CD4-positive, alpha-beta T cell (primary cell): ENCODE measurements at regions of chr14 and their contacts with region 1.

Region 1: DNA sequence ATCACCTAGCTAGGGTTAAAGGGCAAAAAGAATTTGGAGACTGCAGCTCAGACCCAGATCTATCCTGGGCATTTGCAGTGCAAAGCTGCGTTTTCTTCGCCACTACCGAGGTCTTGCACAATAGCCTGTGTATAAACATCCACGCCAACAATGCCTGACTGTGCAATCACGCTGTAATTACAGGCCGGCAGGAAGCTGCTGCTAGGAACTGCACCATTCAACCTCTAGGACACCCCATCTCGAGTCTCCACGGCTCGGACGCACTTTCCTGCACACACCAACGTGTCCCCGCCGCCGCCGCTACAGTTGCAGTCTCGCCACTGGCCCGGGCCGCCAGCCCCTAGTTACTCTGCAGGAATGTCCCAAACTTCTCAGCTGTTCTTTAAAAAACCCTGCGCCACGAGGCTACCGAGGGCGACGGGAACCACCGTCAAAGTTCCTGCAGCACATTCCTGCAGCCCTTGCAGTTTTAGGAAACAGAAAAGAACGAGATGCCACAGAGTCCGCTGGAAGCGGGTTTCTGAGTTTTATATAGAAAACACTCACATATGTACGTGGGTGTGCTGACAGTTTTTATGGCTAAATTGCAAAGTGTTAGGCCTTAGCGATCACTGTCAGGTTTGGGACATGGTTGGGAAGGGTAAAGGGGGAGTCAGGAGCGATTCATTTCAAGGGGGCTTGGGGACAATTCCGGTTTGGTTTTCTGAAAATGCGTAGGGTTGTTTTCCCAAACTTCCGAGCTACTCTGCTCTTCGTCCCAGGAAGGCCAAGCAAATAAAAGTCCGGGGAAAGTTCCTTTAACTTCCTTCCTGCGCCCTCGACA is 65.5 kb upstream of the PTGR2 start:
- DNase-seq: peak; percentile 51 to 84 (median 58)
- ATAC-seq: peak; percentile 70
- H3K4me3 ChIP-seq: peak overlapping the region; percentile 79
- H3K4me3 Mint-ChIP-seq: peak overlapping the region; percentile 96
- H3K27ac ChIP-seq: peak overlapping the region; percentile 67 to 76
- H3K27ac Mint-ChIP-seq: peak overlapping the region; percentile 96
- H3K4me1 ChIP-seq: peaks cover 67% of the 10 kb centered on the region
- H3K4me1 Mint-ChIP-seq: peaks cover 62% of the 10 kb centered on the region
- H3K27me3 ChIP-seq: no peaks in the 10 kb centered on the region
- H3K27me3 Mint-ChIP-seq: no peaks in the 10 kb centered on the region
- CTCF ChIP-seq: no peak

Region 2: DNA sequence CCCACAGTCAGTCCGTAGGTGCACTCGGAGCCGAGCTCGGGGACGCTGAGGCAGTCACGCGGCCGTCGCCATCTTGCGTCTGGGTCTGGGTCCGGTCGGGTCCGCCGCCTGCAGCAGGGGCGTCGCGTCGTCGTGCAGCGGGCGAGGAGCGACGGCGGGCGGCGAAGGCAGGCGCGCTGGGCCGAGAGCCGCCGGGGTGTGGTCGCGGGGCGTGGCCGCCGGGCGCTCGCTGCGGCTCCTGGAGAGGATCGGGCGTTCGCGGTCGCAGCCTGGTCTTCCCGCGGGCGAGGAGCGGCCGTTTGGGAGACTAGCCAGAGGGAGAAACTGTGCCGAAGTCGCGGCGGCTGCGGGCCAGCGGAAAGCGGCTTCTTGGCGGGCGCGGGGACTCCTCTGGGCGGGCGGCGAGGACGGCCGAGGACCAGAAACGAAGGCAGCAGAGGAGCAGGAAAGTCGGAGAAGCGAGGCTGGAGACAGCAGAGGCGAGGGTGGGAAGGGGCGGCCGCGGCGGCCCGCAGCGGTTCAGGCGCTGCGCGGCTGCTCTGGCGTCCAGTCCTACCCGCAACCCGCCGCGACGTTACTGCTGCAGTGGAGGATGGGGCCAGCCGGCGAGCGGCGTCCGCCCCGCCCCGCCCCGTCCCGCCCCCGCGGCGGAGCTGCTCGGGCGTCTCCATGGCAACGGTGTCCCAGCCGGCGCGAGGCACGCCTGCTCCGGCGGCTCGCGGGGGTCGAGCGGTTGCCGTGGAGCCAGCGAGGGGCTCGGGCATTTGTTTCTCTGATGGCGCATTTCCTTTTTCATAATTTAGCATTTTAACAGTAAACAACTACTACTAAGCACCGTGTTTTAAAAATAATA is 72.1 kb before region 1 on chr14 and contains the start of gene PNMA1:
- CTCF ChIA-PET with region 1: interaction called, 3 read pairs
- POLR2A ChIA-PET with region 1: interaction called, 12 read pairs
- intact Hi-C with region 1: no loop called
- DNase-seq: peak; percentile 75 to 95 (median 82)
- ATAC-seq: peak; percentile 68
- H3K4me3 ChIP-seq: peak within 1 kb of the TSS; percentile 87
- H3K4me3 Mint-ChIP-seq: peak within 1 kb of the TSS; percentile 96
- H3K27ac ChIP-seq: peak within 1 kb of the TSS; percentile 73 to 77
- H3K27ac Mint-ChIP-seq: peak within 1 kb of the TSS; percentile 92
- H3K4me1 ChIP-seq: peaks cover 33% of the 10 kb centered on the region
- H3K4me1 Mint-ChIP-seq: peaks cover 33% of the 10 kb centered on the region
- H3K27me3 ChIP-seq: no peaks in the 10 kb centered on the region
- H3K27me3 Mint-ChIP-seq: no peaks in the 10 kb centered on the region
- CTCF ChIP-seq: no peak
- total RNA-seq, gene PNMA1: 52.6 to 55.9 TPM

Region 3: DNA sequence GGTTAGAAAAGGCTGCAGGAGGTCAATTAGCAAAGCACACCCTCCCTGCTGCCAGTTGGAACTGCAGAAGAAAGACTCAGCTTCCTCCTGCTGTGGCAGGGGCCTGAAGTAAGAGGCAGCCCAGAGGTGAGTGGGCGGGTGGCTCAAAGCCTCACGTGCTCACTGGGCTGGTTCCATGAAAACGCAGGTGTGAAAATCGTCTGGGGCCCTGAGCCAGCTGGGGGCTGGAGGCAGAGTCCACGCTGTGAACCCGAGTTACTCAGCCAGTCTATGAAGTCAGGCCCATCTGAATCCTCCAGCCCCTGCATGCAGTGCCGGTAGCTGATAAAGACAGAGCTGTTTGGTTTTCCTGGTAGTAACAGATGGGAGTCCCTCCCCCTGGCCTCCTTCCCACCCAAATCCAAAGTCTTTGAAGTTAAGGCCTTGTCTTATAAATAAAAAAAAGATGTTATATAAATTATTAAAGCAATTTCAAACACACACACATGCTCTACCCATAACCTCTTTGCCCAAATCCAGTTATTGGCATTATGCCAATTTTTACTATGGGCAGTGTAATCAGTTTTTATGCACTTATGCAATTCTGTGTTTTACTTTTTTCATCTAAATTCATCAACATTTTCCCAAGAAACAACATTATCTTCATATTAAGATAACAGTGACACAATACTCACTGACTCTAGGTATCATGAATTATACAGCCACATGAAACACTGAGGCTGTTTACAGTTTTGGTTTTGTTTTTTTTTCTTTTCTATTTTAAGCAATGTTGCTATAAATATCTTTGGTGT is 14.0 kb before region 1 on chr14:
- CTCF ChIA-PET with region 1: interaction called, 9 read pairs
- POLR2A ChIA-PET with region 1: interaction called, 430 read pairs
- intact Hi-C with region 1: loop called in 1 of 2 experiments (anchors 1 kb)
- DNase-seq: peak in 12 of 14 experiments; percentile 39 to 84 (median 59)
- ATAC-seq: peak; percentile 83
- H3K4me3 ChIP-seq: no peak overlapping the region
- H3K4me3 Mint-ChIP-seq: peak overlapping the region; percentile 81
- H3K27ac ChIP-seq: peak overlapping the region; percentile 48 to 60
- H3K27ac Mint-ChIP-seq: peak overlapping the region; percentile 88
- H3K4me1 ChIP-seq: peaks cover 74% of the 10 kb centered on the region
- H3K4me1 Mint-ChIP-seq: peaks cover 75% of the 10 kb centered on the region
- H3K27me3 ChIP-seq: no peaks in the 10 kb centered on the region
- H3K27me3 Mint-ChIP-seq: no peaks in the 10 kb centered on the region
- CTCF ChIP-seq: no peak

Region 4: DNA sequence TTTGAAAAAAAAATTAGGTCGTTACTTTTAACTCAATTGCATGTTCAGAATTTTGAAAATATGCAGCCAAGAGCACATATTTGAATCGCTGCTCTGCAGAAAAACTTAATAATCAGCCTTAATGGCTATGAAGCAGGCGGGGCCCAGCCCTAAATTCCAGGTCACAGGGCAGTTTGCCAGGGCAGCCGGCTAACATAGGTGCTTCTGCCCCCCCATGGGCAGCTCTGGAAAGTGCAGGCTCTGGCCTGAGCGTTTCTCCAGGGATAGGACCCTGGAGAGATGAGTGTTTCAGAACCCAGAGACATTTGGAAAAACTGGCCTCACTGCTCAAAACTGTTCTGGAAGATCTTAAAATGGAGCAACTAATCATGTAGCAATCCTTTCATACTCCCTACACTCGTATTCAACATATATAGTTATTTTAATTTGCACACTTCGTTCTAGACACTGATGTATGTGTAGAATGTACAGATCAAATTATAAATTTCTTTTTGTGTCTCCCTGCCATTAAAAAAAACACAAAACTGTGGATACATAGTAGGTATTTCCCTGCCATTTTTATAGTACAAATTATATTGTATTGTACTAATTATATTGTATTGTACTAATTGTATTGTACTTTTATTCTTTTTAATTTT is 39.6 kb after region 1 on chr14:
- CTCF ChIA-PET with region 1: interaction called, 8 read pairs
- POLR2A ChIA-PET with region 1: interaction called, 4 read pairs
- intact Hi-C with region 1: loop called (anchors 2 to 5 kb)
- DNase-seq: peak; percentile 62 to 88 (median 76)
- ATAC-seq: peak; percentile 99
- H3K4me3 ChIP-seq: no peak overlapping the region
- H3K4me3 Mint-ChIP-seq: no peak overlapping the region
- H3K27ac ChIP-seq: no peak overlapping the region
- H3K27ac Mint-ChIP-seq: no peak overlapping the region
- H3K4me1 ChIP-seq: peaks cover 10% of the 10 kb centered on the region
- H3K4me1 Mint-ChIP-seq: no peaks in the 10 kb centered on the region
- H3K27me3 ChIP-seq: no peaks in the 10 kb centered on the region
- H3K27me3 Mint-ChIP-seq: no peaks in the 10 kb centered on the region
- CTCF ChIP-seq: peak; percentile 95

Region 5: DNA sequence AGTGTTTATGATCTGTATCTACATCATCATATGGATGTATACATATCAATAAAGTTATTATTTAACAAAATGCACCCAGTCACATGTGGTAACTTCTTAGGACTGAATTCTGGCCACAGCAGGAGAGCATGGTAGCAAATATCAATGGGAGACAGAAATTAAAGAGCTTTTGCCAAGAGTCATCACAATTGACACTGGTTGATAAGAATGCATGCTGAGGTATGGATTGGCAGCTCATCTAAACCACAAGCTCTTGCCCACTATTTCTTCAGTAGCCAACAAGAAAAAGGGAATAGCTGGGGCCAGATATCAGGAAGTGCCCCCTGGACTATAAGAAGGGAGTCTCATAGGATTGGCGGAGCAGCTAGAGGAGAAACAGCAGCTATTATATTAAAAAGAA is 56.1 kb after region 1 on chr14:
- CTCF ChIA-PET with region 1: no interaction called
- POLR2A ChIA-PET with region 1: no interaction called
- intact Hi-C with region 1: no loop called
- DNase-seq: no peak
- ATAC-seq: no peak
- H3K4me3 ChIP-seq: no peak overlapping the region
- H3K4me3 Mint-ChIP-seq: no peak overlapping the region
- H3K27ac ChIP-seq: no peak overlapping the region
- H3K27ac Mint-ChIP-seq: no peak overlapping the region
- H3K4me1 ChIP-seq: no peaks in the 10 kb centered on the region
- H3K4me1 Mint-ChIP-seq: no peaks in the 10 kb centered on the region
- H3K27me3 ChIP-seq: no peaks in the 10 kb centered on the region
- H3K27me3 Mint-ChIP-seq: no peaks in the 10 kb centered on the region
- CTCF ChIP-seq: no peak

Region 6: DNA sequence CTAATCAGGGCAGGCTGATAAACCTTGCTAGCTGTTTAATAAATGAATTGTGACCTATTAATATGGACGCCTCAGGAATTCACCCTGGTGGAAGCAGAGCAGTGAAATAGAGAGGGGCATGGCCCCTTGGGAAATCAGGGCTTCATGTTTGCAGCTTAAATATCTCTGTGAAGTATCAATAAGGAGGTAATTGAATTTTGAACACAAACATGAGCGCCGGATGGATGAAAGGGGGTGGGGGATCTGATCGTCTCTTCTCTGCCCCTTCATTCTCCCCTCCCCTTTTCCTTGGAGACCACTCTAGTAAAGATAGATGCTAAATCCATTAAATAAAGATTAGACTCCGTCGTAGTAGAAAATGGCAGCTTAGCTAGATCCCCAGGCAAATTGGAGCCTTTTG is 369.2 kb after region 1 on chr14:
- CTCF ChIA-PET with region 1: no interaction called
- POLR2A ChIA-PET with region 1: no interaction called
- intact Hi-C with region 1: no loop called
- DNase-seq: no peak
- ATAC-seq: no peak
- H3K4me3 ChIP-seq: no peak overlapping the region
- H3K4me3 Mint-ChIP-seq: no peak overlapping the region
- H3K27ac ChIP-seq: no peak overlapping the region
- H3K27ac Mint-ChIP-seq: no peak overlapping the region
- H3K4me1 ChIP-seq: no peaks in the 10 kb centered on the region
- H3K4me1 Mint-ChIP-seq: no peaks in the 10 kb centered on the region
- H3K27me3 ChIP-seq: no peaks in the 10 kb centered on the region
- H3K27me3 Mint-ChIP-seq: no peaks in the 10 kb centered on the region
- CTCF ChIP-seq: no peak